B cell (primary cell): ENCODE measurements at regions of chr1 and their contacts with region 1.

Region 1: GRCh38 chr1:150010393-150011115 is at the start of gene OTUD7B:
- DNase-seq: peak; percentile 75
- ATAC-seq: peak; percentile 87
- H3K4me3 ChIP-seq: peak within 1 kb of the TSS; percentile 0 to 87 (median 82)
- H3K4me3 Mint-ChIP-seq: peak within 1 kb of the TSS; percentile 92
- H3K27ac ChIP-seq: no peak within 1 kb of the TSS
- H3K27ac Mint-ChIP-seq: peak within 1 kb of the TSS; percentile 56
- H3K4me1 ChIP-seq: peaks cover 15 to 16% of the 10 kb centered on the region in 2 donors
- H3K4me1 Mint-ChIP-seq: peaks cover 12% of the 10 kb centered on the region
- H3K27me3 ChIP-seq: peaks cover 3 to 69% (median 49%) of the 10 kb centered on the region in 4 experiments
- H3K27me3 Mint-ChIP-seq: peaks cover 50% of the 10 kb centered on the region
- CTCF ChIP-seq: no peak
- total RNA-seq, gene OTUD7B: 3.3 and 4.1 TPM in 2 replicates

Region 2: DNA sequence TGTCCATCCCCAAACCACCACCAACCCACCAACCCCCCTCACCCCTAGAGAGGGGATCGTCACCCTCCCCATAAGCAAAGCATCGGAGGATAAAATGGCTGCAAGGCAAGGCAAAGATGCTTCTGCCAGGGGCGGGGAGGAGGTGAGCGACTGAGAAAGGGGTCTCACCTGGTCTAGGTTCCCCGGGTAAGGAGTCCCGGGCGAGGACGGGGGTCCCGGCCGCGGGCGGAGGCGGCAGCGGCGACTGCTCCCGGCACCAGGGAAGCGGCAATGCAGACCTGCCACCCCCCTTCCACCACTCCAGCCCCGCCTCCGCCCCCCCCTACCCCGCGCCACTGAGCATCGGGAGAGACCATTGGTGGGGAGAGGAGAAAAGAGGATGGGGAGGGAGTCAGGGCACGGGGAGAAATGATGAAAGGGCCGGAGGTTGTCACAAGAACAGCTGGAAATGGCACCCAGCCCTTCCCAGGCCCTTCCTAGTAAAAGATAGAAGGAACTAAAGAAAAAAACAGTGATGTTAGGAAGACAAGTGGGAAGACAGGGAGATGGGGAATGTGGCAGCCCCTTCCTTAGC is 92.9 kb before region 1 on chr1 and contains the start of gene SV2A:
- CTCF ChIA-PET with region 1: no interaction called
- POLR2A ChIA-PET with region 1: no interaction called
- intact Hi-C with region 1: no loop called
- DNase-seq: peak; percentile 36
- ATAC-seq: no peak
- H3K4me3 ChIP-seq: peak within 1 kb of the TSS in 4 of 5 experiments; percentile 20 to 50 (median 42)
- H3K4me3 Mint-ChIP-seq: peak within 1 kb of the TSS; percentile 75
- H3K27ac ChIP-seq: no peak within 1 kb of the TSS
- H3K27ac Mint-ChIP-seq: no peak within 1 kb of the TSS
- H3K4me1 ChIP-seq: peaks cover 23 to 25% of the 10 kb centered on the region in 2 donors
- H3K4me1 Mint-ChIP-seq: peaks cover 28% of the 10 kb centered on the region
- H3K27me3 ChIP-seq: peaks cover 0 to 29% (median 16%) of the 10 kb centered on the region in 4 experiments
- H3K27me3 Mint-ChIP-seq: peaks cover 25% of the 10 kb centered on the region
- CTCF ChIP-seq: no peak
- total RNA-seq, gene SV2A: 0.07 and 0.10 TPM in 2 replicates

Region 3: DNA sequence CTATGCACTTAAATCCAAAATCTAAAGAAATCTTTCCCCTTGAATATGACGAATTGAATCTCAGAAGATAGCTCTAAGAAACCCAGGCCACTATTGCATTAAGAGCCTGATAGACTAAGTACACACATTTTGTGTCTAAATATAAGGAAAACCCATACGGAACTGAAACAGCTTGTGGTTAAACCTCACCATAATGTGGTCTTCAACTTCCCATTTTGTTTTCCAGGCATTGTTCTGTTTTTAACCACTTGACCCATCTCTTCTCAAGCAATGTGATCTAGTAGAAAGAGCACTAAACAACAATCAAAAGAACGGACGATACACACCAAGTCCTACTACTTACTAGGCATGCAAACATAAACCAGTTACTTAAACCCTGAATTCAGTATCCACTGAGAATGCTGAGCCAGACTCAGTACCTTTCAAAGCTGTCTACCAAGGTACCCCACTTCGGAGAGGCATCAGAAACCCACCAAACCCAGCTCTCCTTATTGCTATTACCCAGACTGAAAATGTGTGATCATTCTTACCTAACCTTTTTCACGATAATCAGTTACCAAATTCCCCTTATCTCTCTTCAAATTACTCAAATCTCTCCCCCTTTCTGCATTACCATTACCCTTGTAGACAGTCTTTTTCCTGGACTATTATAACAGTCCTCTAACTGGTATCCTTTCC is 12.8 kb before region 1 on chr1:
- CTCF ChIA-PET with region 1: interaction called, 10 read pairs
- POLR2A ChIA-PET with region 1: interaction called, 4 read pairs
- intact Hi-C with region 1: loop called (anchors 1 kb)
- DNase-seq: peak; percentile 92
- ATAC-seq: peak; percentile 92
- H3K4me3 ChIP-seq: peak overlapping the region in 1 of 5 experiments; percentile 35
- H3K4me3 Mint-ChIP-seq: peak overlapping the region; percentile 67
- H3K27ac ChIP-seq: no peak overlapping the region
- H3K27ac Mint-ChIP-seq: peak overlapping the region; percentile 59
- H3K4me1 ChIP-seq: peaks cover 20 to 41% of the 10 kb centered on the region in 2 donors
- H3K4me1 Mint-ChIP-seq: peaks cover 38% of the 10 kb centered on the region
- H3K27me3 ChIP-seq: peaks cover 9 to 60% (median 52%) of the 10 kb centered on the region in 4 experiments
- H3K27me3 Mint-ChIP-seq: peaks cover 53% of the 10 kb centered on the region
- CTCF ChIP-seq: no peak

Region 4: DNA sequence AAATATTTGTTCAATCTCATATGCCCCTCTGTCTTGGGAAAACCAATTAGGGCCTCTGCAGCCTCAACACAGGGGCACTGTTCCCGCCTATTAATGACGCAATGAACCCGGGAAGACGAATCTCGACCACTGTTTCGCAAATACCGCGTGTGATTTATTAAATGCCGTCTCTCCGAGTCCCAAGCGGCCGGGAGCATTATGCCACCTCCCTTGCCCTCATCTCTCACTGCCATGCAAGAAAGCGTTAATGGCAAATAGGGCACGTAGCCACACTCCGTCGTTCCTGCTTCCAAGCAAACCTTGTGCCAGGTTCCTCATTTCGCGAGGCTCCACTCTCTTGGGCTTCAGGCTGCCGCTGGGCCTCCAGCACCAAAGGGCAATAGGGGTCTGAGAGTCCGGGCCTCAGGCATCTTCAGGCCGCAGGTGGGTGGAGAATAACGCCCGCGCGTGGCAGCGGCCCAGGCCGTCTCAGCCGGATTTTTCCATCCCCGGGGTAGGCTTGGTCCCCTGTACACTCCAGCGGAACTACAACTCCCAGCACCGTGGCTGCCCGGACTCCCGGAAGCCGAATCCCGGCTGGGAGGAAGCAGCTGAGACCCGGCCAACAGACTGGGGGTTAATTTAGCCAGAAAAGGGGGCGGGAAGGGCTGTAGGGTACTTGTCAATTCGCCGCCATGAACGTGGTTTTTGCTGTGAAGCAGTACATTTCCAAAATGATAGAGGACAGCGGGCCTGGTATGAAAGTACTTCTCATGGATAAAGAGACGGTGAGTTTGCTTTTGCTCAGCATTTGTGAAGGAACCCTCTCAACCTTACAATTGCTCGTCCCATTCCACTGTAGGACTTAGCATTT is 56.9 kb after region 1 on chr1 and contains the start of gene VPS45:
- CTCF ChIA-PET with region 1: no interaction called
- POLR2A ChIA-PET with region 1: no interaction called
- intact Hi-C with region 1: loop called (anchors 2 kb)
- DNase-seq: peak; percentile 88
- ATAC-seq: peak; percentile 88
- H3K4me3 ChIP-seq: peak within 1 kb of the TSS; percentile 61 to 92 (median 79)
- H3K4me3 Mint-ChIP-seq: peak within 1 kb of the TSS; percentile 98
- H3K27ac ChIP-seq: peak within 1 kb of the TSS; percentile 74 to 85
- H3K27ac Mint-ChIP-seq: peak within 1 kb of the TSS; percentile 97
- H3K4me1 ChIP-seq: peaks cover 0 to 15% of the 10 kb centered on the region in 2 donors
- H3K4me1 Mint-ChIP-seq: peaks cover 32% of the 10 kb centered on the region
- H3K27me3 ChIP-seq: no peaks in the 10 kb centered on the region
- H3K27me3 Mint-ChIP-seq: no peaks in the 10 kb centered on the region
- CTCF ChIP-seq: no peak
- total RNA-seq, gene VPS45: 49.1 and 50.0 TPM in 2 replicates